ENCODE measurements at regions of chrX and their contacts with region 1.

Region 1: GRCh38 chrX:13376857-13377549 is 57.1 kb upstream of the ATXN3L start:
- DNase-seq: peak in 1 of 2 donors; percentile 28
- ATAC-seq: peak in 7 of 8 donors; percentile 39 to 83 (median 63)
- H3K4me3 ChIP-seq: no peak overlapping the region
- H3K27ac ChIP-seq: peak overlapping the region in 6 of 10 donors; percentile 35 to 68 (median 58)
- H3K4me1 ChIP-seq: peaks cover 0 to 15% (median 0%) of the 10 kb centered on the region in 9 donors
- H3K27me3 ChIP-seq: peaks cover 0 to 26% (median 0%) of the 10 kb centered on the region in 7 donors
- CTCF ChIP-seq: no peak

Region 2: DNA sequence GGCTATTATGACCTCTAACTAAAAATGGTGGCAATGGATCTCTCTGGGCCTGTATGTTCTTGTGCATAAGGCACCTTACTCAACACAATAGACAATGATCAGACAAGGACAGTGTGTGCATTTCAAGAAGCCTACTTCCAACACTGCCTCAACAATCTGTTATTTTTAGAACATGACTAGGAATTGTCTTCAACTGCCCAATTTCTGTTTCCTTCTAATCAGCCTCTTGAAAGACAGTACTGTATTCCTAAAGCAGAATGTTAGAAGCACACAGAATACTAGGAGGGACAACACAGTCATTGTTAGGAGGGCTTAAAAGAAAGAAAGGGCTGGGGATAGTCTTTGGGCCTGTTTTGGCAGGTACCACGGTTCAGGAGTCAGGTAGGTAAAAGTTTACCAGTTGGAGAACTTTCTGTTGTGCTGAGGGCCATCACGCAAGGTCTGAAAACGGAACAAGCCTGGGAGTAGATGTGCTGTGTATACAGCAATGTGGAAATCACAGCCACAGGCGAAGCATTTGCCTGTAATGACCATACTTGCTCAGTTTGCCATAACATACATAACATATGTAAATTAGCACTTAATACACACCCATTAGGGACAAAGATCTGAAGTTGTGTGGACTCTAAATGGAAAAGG is 43.7 kb after region 1 on chrX:
- intact Hi-C with region 1: loop called in 1 of 10 experiments (anchors 5 kb)
- DNase-seq: no peak
- ATAC-seq: peak in 3 of 8 donors; percentile 39 to 77 (median 42)
- H3K4me3 ChIP-seq: no peak overlapping the region
- H3K27ac ChIP-seq: peak overlapping the region in 1 of 10 donors; percentile 28
- H3K4me1 ChIP-seq: peaks cover 0 to 4% (median 0%) of the 10 kb centered on the region in 9 donors
- H3K27me3 ChIP-seq: peaks cover 0 to 18% (median 0%) of the 10 kb centered on the region in 7 donors
- CTCF ChIP-seq: no peak

Region 3: GRCh38 chrX:13845721-13846378 is 468.8 kb after region 1 on chrX:
- intact Hi-C with region 1: no loop called
- DNase-seq: no peak
- ATAC-seq: peak in 1 of 8 donors; percentile 27
- H3K4me3 ChIP-seq: no peak overlapping the region
- H3K27ac ChIP-seq: no peak overlapping the region
- H3K4me1 ChIP-seq: no peaks in the 10 kb centered on the region
- H3K27me3 ChIP-seq: peaks cover 0 to 21% (median 0%) of the 10 kb centered on the region in 7 donors
- CTCF ChIP-seq: no peak

Measured in heart right ventricle (tissue), 16 donors.